Activated CD4-positive, alpha-beta T cell treated with anti-CD3 and anti-CD28 coated beads for 36 hours (primary cell): ENCODE measurements at regions of chr16 and their contacts with region 1.

Region 1: GRCh38 chr16:25045696-25046381 is 30.7 kb upstream of the ARHGAP17 start:
- DNase-seq: no peak
- ATAC-seq: no peak
- H3K4me3 Mint-ChIP-seq: no peak overlapping the region
- H3K27ac Mint-ChIP-seq: no peak overlapping the region
- H3K4me1 Mint-ChIP-seq: peaks cover 43% of the 10 kb centered on the region
- H3K27me3 Mint-ChIP-seq: no peaks in the 10 kb centered on the region

Region 2: DNA sequence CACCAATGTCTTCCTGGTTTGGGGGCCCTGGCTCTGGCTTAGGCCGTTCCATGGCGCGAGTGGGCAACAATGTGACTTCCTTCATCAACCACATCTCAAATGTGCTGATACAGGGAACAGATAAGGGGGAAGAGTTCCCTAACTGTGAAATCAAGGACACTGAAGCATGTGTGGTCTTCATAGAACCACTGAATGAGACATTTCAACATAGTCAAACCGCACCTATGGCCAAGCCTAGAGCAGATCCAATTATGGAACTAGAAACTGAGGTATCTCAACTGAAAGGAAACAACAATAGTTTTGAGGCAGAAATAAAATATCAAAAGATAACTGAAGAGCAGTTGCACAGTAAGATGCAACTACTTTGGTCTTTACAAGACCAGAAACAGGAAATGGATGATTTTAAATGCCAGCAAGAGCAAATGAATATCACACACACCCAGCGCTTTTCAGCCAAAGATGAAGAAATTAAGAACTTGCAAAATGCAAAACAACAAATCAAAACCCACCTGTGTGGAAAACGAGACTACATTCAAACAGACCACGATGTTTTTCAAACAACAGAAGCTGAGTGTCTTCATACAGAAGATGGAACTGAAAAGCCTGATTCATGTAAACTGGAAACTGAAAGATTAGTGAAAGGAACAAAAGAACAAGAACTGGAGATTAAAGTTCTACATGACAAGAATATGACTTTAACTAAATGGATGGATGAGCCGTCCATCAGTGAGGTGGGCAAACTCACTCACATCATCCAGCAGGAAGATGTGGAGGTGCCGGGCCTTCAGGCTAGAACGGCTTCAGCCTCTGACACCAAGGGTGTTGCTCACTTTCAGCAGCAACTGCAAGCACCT is 47.6 kb after region 1 on chr16:
- CTCF ChIA-PET with region 1: no interaction called
- POLR2A ChIA-PET with region 1: no interaction called
- intact Hi-C with region 1: loop called in 1 of 2 experiments (anchors 2 kb)
- DNase-seq: peak; percentile 42
- ATAC-seq: peak; percentile 79
- H3K4me3 Mint-ChIP-seq: peak overlapping the region; percentile 17
- H3K27ac Mint-ChIP-seq: peak overlapping the region; percentile 90
- H3K4me1 Mint-ChIP-seq: peaks cover 28% of the 10 kb centered on the region
- H3K27me3 Mint-ChIP-seq: no peaks in the 10 kb centered on the region